ENCODE measurements at regions of chr4 and their contacts with region 1.

Region 1: DNA sequence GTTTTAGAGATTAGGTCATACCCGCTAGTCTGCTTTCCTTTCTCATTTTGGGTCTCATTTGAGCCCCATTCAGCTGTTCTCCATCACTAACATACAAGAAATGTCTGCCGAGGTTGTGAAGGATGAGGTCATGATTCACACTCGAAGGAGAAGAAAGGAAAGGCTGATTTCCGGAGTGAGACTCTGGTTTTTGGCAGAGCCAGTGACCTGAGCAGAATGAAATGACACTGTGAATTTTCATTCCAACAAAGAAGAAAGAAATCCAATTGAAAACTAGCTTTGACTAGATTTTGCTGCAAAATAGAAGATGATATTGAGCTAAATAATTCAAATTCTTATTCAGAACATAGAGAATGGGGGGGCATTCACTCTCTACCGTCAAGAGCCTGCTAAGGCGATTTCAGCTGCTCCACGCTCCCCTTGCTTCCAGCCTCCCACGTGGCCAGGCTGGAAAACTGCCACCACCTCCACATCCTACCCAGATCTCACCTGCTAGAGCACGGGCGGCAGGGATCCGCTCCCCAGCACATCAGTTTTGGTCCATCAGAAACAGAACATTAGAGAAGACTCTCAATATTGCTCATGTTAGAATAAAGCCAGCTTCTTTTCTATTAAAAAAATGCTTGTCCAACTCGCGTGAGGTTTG is 39.0 kb downstream of the F11 start:
- DNase-seq: no peak
- ATAC-seq: no peak
- H3K4me3 ChIP-seq: no peak overlapping the region
- H3K4me3 Mint-ChIP-seq: no peak overlapping the region
- H3K27ac ChIP-seq: no peak overlapping the region
- H3K27ac Mint-ChIP-seq: no peak overlapping the region
- H3K4me1 ChIP-seq: no peaks in the 10 kb centered on the region
- H3K4me1 Mint-ChIP-seq: no peaks in the 10 kb centered on the region
- H3K27me3 ChIP-seq: peaks cover 2 to 8% of the 10 kb centered on the region in 2 experiments
- H3K27me3 Mint-ChIP-seq: peaks cover 67% of the 10 kb centered on the region
- CTCF ChIP-seq: no peak

Region 2: DNA sequence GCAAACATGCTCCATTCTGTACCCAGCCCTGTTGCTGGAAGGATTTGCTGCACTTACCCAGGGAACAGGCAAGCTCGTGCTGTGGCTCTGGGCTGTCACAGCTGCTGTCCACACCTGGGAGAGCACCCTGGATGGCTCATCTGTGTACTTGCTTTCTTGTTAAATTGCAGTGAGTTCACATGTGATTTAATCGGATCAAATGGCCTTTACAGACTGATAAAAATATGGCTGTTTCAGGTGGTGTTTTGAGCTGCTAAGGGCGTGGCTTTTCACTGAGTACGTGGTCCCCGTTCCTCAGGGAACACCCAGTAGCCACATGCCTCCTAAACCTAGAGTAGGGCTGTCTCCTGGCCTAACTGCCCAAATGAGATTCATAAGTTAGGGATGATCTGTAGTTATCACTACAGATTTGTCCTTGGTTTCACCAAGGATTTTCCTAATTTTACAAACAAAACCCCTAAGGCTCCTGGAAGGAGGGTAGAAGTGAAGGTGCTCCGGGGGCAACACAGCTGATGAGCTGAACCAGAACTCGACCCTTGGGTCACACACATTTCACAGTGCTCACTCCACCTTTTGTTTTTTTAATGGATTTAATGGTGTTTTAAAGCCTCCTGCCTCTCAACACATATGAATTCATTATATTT is 64.0 kb before region 1 on chr4:
- CTCF ChIA-PET with region 1: no interaction called
- POLR2A ChIA-PET with region 1: no interaction called
- intact Hi-C with region 1: no loop called
- DNase-seq: no peak
- ATAC-seq: no peak
- H3K4me3 ChIP-seq: no peak overlapping the region
- H3K4me3 Mint-ChIP-seq: no peak overlapping the region
- H3K27ac ChIP-seq: no peak overlapping the region
- H3K27ac Mint-ChIP-seq: no peak overlapping the region
- H3K4me1 ChIP-seq: no peaks in the 10 kb centered on the region
- H3K4me1 Mint-ChIP-seq: no peaks in the 10 kb centered on the region
- H3K27me3 ChIP-seq: no peaks in the 10 kb centered on the region
- H3K27me3 Mint-ChIP-seq: no peaks in the 10 kb centered on the region
- CTCF ChIP-seq: no peak

Region 3: DNA sequence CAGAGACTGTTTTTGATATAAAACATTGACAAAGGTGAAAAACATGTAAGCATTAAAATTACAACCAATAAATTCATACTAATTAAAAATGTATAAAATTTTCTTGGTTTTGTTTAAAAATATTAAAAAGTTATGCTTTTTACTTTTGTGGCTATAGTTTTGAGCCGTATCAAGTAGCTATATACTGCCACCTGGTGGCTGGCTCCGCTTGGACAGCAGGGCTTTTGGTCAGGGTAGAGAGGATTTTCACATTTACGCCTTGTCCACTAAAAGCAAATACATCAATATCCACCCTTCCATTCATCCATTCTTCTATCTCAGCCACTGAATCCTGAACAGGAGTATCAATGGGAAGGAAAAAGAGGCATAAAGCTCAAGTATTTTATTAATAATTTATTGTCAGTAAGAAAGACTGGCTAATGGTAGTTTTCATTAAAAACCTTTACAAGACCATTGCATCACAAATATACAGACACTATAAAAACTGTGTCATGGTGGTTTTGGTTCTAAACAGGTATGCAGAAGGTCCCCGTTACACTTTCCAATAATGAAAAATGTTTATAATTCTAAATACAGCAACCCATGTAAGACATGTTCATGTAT is 282.5 kb after region 1 on chr4:
- CTCF ChIA-PET with region 1: no interaction called
- POLR2A ChIA-PET with region 1: no interaction called
- intact Hi-C with region 1: loop called in 1 of 2 experiments (anchors 5 kb)
- DNase-seq: peak; percentile 15 to 65 (median 46)
- ATAC-seq: no peak
- H3K4me3 ChIP-seq: no peak overlapping the region
- H3K4me3 Mint-ChIP-seq: no peak overlapping the region
- H3K27ac ChIP-seq: no peak overlapping the region
- H3K27ac Mint-ChIP-seq: no peak overlapping the region
- H3K4me1 ChIP-seq: no peaks in the 10 kb centered on the region
- H3K4me1 Mint-ChIP-seq: no peaks in the 10 kb centered on the region
- H3K27me3 ChIP-seq: no peaks in the 10 kb centered on the region
- H3K27me3 Mint-ChIP-seq: peaks cover 4% of the 10 kb centered on the region
- CTCF ChIP-seq: peak; percentile 89